ENCODE measurements at regions of chr6 and their contacts with region 1.

Region 1: DNA sequence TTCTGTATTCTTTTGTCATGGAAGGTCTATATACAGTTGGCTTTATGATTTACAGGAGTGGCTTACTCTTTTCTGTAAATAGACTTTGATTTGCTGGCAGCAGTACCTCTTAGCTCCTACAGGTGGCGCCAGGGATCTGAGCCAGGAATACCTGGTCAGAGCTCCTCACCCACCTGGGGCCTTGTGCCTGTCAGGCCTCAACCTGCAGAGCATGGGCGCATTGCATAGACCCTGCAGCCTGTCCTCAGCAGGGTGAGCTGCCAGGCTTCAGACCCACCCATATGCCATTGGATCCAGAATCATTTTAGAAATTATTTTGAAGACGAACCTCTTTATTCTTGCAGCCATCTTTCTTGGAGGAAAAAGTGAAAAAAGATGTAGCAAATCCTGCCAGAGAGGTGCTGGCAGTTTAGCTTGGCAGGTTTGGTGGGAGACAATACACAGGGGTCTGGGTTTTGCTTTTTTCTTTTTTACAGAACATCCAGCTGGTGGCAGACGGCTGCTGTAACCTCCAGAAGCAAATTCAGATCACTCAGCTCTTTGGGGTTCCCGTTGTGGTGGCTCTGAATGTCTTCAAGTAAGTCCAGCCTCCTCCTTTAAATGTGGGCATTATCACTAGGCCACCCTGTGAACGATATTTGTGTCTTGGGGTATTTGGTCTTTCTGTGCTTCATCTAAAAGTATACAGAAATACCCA is 149.1 kb downstream of the MTHFD1L start:
- DNase-seq: peak; percentile 62
- H3K4me3 Mint-ChIP-seq: no peak overlapping the region
- H3K27ac Mint-ChIP-seq: peak overlapping the region; percentile 14
- H3K4me1 Mint-ChIP-seq: peaks cover 13% of the 10 kb centered on the region
- H3K27me3 Mint-ChIP-seq: no peaks in the 10 kb centered on the region

Region 2: GRCh38 chr6:150987371-150987828 is 27.2 kb before region 1 on chr6:
- CTCF ChIA-PET with region 1: interaction called, 14 read pairs
- POLR2A ChIA-PET with region 1: no interaction called
- DNase-seq: peak; percentile 72
- H3K4me3 Mint-ChIP-seq: peak overlapping the region; percentile 40
- H3K27ac Mint-ChIP-seq: peak overlapping the region; percentile 95
- H3K4me1 Mint-ChIP-seq: peaks cover 25% of the 10 kb centered on the region
- H3K27me3 Mint-ChIP-seq: no peaks in the 10 kb centered on the region

Region 3: GRCh38 chr6:151004415-151005024 is 10.0 kb before region 1 on chr6:
- CTCF ChIA-PET with region 1: interaction called, 49 read pairs
- POLR2A ChIA-PET with region 1: interaction called, 6 read pairs
- DNase-seq: no peak
- H3K4me3 Mint-ChIP-seq: no peak overlapping the region
- H3K27ac Mint-ChIP-seq: peak overlapping the region; percentile 64
- H3K4me1 Mint-ChIP-seq: peaks cover 18% of the 10 kb centered on the region
- H3K27me3 Mint-ChIP-seq: no peaks in the 10 kb centered on the region

Region 4: GRCh38 chr6:151025076-151025475 is 10.5 kb after region 1 on chr6:
- CTCF ChIA-PET with region 1: interaction called, 32 read pairs
- POLR2A ChIA-PET with region 1: no interaction called
- DNase-seq: no peak
- H3K4me3 Mint-ChIP-seq: no peak overlapping the region
- H3K27ac Mint-ChIP-seq: no peak overlapping the region
- H3K4me1 Mint-ChIP-seq: peaks cover 7% of the 10 kb centered on the region
- H3K27me3 Mint-ChIP-seq: no peaks in the 10 kb centered on the region

Region 5: DNA sequence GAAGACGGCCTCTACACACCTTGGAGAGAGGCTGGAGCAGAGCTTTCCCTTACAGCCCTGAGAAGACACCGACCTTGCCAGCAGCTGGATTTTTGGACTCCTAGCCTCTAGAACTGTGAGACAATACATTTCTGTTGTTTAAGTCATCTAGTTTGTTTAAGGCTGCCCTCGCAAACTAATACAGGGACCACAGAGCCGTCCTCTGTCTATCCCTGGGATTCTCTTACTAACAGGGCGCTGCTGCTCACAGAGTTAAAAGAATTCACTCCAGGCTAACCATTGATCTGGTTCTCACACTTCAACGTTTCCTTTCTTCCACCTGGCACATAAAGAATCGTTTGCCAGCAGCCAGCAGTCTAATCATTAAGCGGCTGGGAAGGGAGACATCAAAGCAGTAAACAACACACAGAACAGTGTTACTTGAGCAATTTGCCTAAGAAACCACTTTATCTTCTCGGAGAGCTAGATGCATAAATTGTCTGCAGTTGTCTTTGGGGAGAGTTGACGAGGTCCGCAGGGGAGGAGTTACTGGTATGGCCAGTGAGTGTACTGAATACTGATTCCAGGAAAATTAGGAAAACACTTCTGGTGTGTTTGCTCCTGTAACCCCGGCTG is 121.7 kb after region 1 on chr6:
- CTCF ChIA-PET with region 1: no interaction called
- POLR2A ChIA-PET with region 1: no interaction called
- DNase-seq: no peak
- H3K4me3 Mint-ChIP-seq: no peak overlapping the region
- H3K27ac Mint-ChIP-seq: no peak overlapping the region
- H3K4me1 Mint-ChIP-seq: no peaks in the 10 kb centered on the region
- H3K27me3 Mint-ChIP-seq: peaks cover 15% of the 10 kb centered on the region

Region 6: DNA sequence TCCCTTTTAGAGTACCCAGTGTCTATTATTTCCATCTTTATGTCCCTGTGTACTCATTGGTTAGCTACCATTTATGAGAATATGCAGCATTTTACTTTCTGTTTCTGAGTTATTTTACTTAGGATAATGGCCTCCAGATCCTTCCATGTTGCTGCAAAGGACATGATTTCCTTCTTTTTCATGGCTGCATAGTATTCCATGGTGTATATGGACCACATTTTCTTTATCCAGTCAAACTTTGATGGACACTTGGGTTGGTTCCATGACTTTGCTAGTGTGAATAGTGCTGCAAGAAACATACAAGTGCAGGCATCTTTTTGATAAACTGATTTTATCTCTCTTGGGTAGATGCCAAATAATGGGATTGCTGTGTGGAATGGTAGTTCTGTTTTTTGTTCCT is 321.4 kb after region 1 on chr6:
- CTCF ChIA-PET with region 1: interaction called, 32 read pairs
- POLR2A ChIA-PET with region 1: no interaction called
- DNase-seq: no peak
- H3K4me3 Mint-ChIP-seq: no peak overlapping the region
- H3K27ac Mint-ChIP-seq: no peak overlapping the region
- H3K4me1 Mint-ChIP-seq: no peaks in the 10 kb centered on the region
- H3K27me3 Mint-ChIP-seq: peaks cover 19% of the 10 kb centered on the region

Measured in activated CD4-positive, alpha-beta memory T cell treated with anti-CD3 and anti-CD28 coated beads, Interleukin-2, amount 10 ng/mL, durations not matched to agents 7 days and 5 days (primary cell).